Endothelial cell of umbilical vein (primary cell): ENCODE measurements at regions of chr7 and their contacts with region 1.

Region 1: DNA sequence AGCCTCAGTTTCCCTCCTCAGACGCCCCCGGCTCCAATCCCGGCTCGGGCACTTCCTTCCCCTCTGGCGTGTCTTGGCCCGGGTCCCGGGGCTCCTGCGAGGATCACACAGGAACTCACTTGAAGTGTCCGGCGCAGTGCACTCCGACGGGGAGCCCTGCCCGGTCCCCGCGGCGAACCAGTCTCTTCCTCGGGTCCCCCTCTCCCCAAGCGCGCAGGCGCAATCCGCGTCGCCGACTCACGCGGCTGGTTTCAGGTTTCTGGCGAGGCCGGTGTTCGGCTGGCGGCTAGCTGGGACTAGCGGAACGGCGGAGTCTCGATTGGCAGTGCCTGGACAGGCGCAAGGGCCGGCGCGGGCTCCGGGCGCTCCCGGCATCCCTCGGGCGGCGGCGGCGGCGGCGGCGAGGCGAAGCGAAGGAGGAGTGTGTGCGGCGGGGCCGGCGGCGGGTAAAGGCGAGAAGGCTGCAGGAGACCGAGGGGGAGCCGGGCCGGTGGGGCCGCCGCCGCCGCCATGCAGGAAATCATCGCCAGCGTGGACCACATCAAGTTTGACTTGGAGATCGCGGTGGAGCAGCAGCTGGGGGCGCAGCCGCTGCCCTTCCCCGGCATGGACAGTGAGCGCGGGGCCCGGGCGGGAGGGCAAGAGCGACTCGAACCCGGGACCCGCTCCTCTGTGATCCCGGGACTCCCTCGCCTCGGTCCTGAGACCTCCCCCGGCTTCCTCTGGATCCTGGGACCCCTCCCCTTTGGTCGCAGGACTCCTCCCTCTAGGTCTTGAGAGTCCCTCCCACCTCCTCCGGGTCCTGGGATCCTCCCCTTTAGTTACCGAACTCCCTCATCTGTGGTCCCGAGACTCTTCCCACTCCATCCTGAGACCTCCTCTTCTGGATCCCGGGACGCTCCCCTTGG is at the starts of genes CPSF4 and PTCD1:
- DNase-seq: peak; percentile 95
- H3K4me3 ChIP-seq: peak within 1 kb of the TSS; percentile 83 to 89 (median 88)
- H3K27ac ChIP-seq: peak within 1 kb of the TSS; percentile 9
- H3K4me1 ChIP-seq: peaks cover 14% of the 10 kb centered on the region
- H3K27me3 ChIP-seq: no peaks in the 10 kb centered on the region
- CTCF ChIP-seq: no peak
- POLR2A ChIP-seq: peak; percentile 71
- total RNA-seq, gene CPSF4: 48.3 and 51.5 TPM in 2 replicates
- total RNA-seq, gene PTCD1: 6.9 and 9.6 TPM in 2 replicates

Region 2: DNA sequence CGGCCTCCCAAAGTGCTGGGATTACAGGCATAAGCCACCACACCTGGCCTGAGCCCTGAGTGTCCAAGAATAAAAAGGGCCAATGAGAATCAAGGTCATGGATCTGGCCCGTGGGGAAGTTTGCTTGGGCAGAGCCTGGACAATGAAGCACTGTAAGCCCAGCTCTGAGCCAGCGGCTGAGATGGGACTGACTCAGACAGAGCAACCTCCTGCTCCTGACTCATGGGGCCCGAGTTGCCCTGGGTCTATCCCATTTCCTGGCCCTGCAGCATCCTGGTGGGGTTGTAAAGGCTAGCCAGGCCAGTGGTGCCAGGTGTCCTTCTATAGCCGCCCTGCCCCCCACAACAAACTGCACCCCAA is 171.4 kb before region 1 on chr7:
- CTCF ChIA-PET with region 1: no interaction called
- POLR2A ChIA-PET with region 1: no interaction called
- dilution Hi-C with region 1: no loop called
- intact Hi-C with region 1: no loop called
- DNase-seq: peak; percentile 76
- H3K4me3 ChIP-seq: no peak overlapping the region
- H3K27ac ChIP-seq: peak overlapping the region; percentile 34
- H3K4me1 ChIP-seq: peaks cover 16% of the 10 kb centered on the region
- H3K27me3 ChIP-seq: no peaks in the 10 kb centered on the region
- CTCF ChIP-seq: no peak
- POLR2A ChIP-seq: no peak

Region 3: DNA sequence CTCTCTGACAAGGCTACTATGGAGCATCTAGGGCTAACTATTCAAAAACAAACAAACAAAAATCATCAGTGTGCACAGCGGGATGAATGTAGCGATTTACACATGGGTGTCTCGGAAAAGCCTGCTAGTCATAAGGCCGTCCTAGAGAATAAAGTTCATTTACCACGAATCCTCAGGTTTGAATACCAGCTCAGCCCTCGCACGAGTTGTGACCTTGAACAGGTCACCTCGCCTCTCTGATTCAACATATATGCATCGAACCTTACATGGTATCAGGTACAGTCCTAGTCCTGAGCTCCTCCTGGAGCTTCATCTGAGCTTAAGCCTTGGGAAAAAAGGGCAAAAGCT is 26.6 kb after region 1 on chr7:
- CTCF ChIA-PET with region 1: no interaction called
- POLR2A ChIA-PET with region 1: no interaction called
- dilution Hi-C with region 1: no loop called
- intact Hi-C with region 1: loop called (anchors 1 kb)
- DNase-seq: no peak
- H3K4me3 ChIP-seq: peak overlapping the region; percentile 32 to 91 (median 64)
- H3K27ac ChIP-seq: peak overlapping the region; percentile 64
- H3K4me1 ChIP-seq: peaks cover 9% of the 10 kb centered on the region
- H3K27me3 ChIP-seq: no peaks in the 10 kb centered on the region
- CTCF ChIP-seq: no peak
- POLR2A ChIP-seq: no peak

Region 4: DNA sequence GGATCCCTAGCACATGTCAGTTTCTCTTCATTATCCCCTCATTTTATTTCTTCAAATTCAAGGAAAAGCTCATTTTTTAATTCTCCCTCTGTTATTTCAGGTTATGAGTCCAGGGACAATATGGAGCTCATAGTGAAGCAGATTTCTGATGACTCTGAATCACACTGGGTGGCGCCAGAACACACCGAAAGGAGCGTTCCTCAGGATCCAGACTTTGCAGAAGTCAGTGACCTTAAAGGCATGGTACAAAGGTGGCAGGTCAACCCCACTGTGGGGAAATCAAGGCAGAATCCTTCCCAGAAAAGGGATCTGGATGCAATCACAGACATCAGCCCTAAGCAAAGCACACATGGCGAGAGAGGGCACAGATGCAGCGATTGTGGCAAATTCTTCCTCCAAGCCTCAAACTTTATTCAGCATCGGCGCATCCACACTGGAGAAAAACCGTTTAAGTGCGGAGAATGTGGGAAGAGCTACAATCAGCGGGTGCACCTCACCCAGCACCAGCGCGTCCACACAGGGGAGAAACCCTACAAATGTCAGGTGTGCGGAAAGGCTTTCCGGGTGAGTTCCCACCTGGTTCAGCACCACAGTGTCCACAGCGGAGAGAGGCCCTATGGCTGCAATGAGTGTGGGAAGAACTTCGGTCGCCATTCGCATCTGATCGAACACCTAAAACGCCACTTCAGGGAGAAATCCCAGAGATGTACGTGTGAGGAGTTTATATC is 87.0 kb after region 1 on chr7:
- CTCF ChIA-PET with region 1: no interaction called
- POLR2A ChIA-PET with region 1: no interaction called
- dilution Hi-C with region 1: no loop called
- intact Hi-C with region 1: no loop called
- DNase-seq: no peak
- H3K4me3 ChIP-seq: no peak overlapping the region
- H3K27ac ChIP-seq: no peak overlapping the region
- H3K4me1 ChIP-seq: no peaks in the 10 kb centered on the region
- H3K27me3 ChIP-seq: no peaks in the 10 kb centered on the region
- CTCF ChIP-seq: no peak
- POLR2A ChIP-seq: no peak